ENCODE measurements at regions of chr17 and their contacts with region 1.

Region 1: DNA sequence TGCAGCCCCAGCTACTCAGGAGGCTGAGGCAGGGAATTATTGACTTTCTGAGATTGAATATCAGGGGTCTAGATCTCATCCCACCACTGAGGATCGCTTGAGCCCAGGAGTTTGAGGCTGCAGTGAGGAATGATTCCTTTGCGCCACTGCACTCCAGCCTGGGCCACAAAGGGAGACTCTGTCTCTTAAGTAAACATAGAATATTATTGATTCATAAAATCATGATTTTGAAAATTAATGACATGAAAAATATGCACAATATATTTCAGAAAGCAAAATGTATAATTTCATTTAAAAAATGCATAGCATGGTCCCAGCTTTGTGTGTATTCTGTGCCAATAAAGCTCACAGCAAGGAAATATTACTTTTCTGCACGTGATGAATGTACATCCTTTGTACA is 1.6 kb upstream of the VPS53 start:
- DNase-seq: no peak
- H3K4me3 ChIP-seq: peak overlapping the region in 46 of 59 donors; percentile 4 to 99 (median 96)
- H3K27ac ChIP-seq: no peak overlapping the region
- H3K27me3 ChIP-seq: no peaks in the 10 kb centered on the region
- CTCF ChIP-seq: no peak

Region 2: DNA sequence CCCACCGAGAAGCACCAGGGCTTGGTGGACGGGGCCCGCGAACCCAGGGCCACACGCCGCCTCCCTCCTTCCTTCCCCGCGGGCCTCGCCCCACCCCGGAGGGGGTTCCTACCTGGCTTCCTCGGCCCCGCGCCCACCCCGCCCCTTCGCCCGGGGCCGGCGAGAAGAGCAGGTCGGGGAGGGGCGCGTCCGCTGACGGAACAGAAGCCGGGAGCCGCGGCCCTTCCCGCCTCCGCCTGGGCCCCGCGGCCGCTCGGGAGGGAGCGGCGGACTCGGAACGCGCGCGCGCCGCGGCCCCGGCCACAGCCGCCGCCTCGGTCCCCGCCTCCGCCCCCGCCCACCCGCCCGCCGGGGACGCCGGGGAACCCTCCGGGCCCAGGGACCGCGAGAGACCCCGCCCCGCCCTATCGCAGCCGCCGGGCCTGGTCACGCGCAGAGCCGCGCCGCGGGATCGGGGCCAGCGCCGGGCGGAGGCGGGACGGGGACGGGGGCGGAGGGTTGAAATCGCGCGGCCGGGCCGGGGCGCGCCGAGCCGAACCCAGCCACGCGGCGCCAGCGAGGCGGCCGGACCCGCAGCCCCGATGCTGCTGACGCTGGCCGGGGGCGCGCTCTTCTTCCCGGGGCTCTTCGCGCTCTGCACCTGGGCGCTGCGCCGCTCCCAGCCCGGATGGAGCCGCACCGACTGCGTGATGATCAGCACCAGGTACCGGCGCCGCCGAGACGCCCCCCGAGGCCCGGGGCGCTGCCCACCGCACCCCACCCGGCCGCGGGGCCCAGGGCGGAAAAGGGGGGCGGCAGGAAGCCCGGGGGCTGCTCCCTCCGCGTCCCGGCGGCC is 16.0 kb after region 1 on chr17 and contains the start of gene TLCD3A:
- intact Hi-C with region 1: loop called in 1 of 2 experiments (anchors 2 kb)
- DNase-seq: peak in 6 of 10 donors; percentile 36 to 75 (median 67)
- H3K4me3 ChIP-seq: peak within 1 kb of the TSS; percentile 51 to 91 (median 80)
- H3K27ac ChIP-seq: peak within 1 kb of the TSS in 53 of 59 donors; percentile 29 to 91 (median 77)
- H3K27me3 ChIP-seq: no peaks in the 10 kb centered on the region
- CTCF ChIP-seq: no peak
- total RNA-seq, gene TLCD3A: 4.2 to 19.9 (median 7.4) TPM

Region 3: DNA sequence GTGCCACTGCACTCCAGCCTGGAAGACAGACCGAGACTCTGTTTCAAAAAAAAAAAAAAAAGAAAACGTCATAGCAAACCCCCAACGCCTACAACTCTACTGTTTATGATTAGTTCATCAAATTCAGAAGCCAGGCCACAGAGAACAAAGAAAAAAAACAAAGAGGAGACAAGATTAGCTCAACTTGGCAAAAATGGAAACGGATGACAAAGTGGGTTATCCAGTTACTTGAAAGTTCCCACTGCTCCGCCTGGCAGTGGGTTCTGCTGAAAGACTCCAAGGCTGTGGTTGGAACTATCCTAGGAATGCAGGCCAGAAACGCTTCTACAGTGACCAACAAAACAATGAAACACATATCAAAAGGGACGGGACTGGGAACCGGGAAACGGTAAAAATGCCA is 119.0 kb after region 1 on chr17:
- intact Hi-C with region 1: no loop called
- DNase-seq: no peak
- H3K4me3 ChIP-seq: no peak overlapping the region
- H3K27ac ChIP-seq: no peak overlapping the region
- H3K27me3 ChIP-seq: no peaks in the 10 kb centered on the region
- CTCF ChIP-seq: no peak